Heart left ventricle (tissue), 16 donors: ENCODE measurements at regions of chr11 and their contacts with region 1.

Region 1: GRCh38 chr11:1931341-1932099 is 12.0 kb downstream of the TNNT3 start:
- DNase-seq: peak; percentile 47 to 67 (median 64)
- ATAC-seq: peak in 2 of 4 donors; percentile 31 to 35
- H3K4me3 ChIP-seq: no peak overlapping the region
- H3K27ac ChIP-seq: peak overlapping the region; percentile 4 to 67 (median 53)
- H3K4me1 ChIP-seq: peaks cover 0 to 39% (median 17%) of the 10 kb centered on the region in 12 donors
- H3K27me3 ChIP-seq: no peaks in the 10 kb centered on the region
- CTCF ChIP-seq: no peak
- POLR2A ChIP-seq: no peak

Region 2: DNA sequence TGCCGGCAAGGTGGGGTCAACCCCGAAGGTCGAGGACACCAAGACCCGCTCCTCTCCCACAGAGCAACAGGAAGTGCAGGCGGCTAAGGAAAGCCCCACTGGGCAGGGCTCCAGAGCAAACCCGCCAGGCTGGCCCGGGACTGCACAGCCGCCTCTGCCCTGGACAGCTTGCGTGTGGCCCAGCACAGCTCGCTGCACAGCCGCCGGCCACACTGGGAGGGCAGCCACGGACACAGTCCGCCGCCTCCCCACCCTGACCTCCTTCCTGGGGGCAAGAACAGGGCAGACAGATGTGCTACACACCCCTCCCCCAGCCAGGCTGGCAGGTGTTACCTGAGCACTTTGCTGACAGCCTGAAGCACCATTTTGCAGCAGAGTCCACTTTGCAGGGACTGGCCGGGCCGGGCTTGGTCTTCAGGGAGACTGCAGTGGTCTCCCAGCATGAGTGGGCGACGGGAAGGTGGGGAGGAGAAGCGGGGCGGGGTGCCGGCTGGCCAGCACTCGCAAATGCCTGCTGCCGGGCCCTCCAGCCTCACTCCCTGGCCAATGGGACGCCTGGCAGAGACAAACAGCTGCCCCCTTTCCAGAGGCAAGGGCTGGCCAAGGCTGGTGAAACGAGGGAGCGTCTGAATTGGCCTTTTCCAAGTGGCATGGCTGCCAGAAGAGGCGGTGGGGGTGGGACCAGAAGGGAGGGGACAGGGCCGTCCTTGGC is 445.2 kb before region 1 on chr11 and contains the start of gene MOB2:
- intact Hi-C with region 1: no loop called
- DNase-seq: peak in 4 of 5 donors; percentile 40 to 76 (median 60)
- ATAC-seq: peak in 3 of 4 donors; percentile 48 to 63 (median 58)
- H3K4me3 ChIP-seq: peak within 1 kb of the TSS in 10 of 12 donors; percentile 10 to 48 (median 36)
- H3K27ac ChIP-seq: peak within 1 kb of the TSS in 9 of 12 donors; percentile 12 to 92 (median 26)
- H3K4me1 ChIP-seq: peaks cover 19 to 90% (median 65%) of the 10 kb centered on the region in 12 donors
- H3K27me3 ChIP-seq: no peaks in the 10 kb centered on the region
- CTCF ChIP-seq: no peak
- POLR2A ChIP-seq: no peak
- total RNA-seq, gene MOB2: 35.5 to 53.7 (median 44.7) TPM

Region 3: GRCh38 chr11:1832211-1832919 is 99.2 kb before region 1 on chr11:
- intact Hi-C with region 1: no loop called
- DNase-seq: peak in 4 of 5 donors; percentile 52 to 80 (median 60)
- ATAC-seq: peak; percentile 74 to 83 (median 80)
- H3K4me3 ChIP-seq: peak overlapping the region in 9 of 12 donors; percentile 5 to 40 (median 28)
- H3K27ac ChIP-seq: no peak overlapping the region
- H3K4me1 ChIP-seq: peaks cover 0 to 15% (median 7%) of the 10 kb centered on the region in 12 donors
- H3K27me3 ChIP-seq: peaks cover 0 to 18% (median 0%) of the 10 kb centered on the region in 9 donors
- CTCF ChIP-seq: peak in 11 of 12 donors; percentile 95 to 100 (median 98)
- POLR2A ChIP-seq: peak in 1 of 2 donors; percentile 18

Region 4: DNA sequence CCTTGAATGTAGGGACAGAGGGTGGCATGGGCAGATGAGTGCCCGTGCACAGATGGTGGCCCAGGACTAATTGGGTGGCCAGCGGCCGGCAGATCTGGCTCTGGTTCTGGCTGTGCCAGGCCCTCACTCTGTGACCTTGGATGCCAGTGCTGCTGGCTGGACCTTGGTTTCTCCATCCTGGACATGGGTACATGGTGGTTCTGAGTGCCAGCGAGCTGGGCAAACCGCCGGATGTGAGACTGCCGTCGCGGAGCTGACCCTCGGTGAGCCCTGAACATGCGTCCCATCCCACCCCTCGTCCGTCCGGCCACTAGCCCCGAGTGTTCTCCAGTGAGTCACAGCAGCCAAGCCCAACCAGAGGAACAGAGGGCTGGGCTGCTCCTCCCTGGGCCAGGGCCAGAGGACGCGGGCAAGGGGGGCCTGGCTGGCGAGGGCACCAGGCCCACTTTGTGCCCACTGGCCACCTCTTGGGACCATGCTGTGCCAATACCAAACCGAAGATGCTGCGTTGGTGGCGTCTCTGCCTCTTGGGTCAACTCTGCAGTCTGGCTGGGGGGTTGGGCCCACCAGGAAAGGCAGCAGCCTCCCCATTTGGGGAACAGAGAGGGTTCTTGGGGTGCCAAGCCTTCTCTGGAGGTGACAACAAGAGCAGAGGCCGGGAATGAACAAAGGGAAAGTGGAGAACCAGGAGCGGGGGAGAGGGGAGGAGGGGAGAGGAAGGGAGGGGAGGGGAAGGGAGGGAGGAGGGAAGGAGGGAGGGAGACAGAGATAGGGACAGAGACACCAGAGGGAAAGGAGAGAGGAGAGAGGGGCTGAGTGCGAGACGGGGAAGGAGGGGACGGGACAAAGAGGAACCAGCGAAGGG is 67.9 kb before region 1 on chr11:
- intact Hi-C with region 1: no loop called
- DNase-seq: peak; percentile 89 to 94 (median 92)
- ATAC-seq: peak; percentile 89 to 95 (median 91)
- H3K4me3 ChIP-seq: peak overlapping the region in 10 of 12 donors; percentile 33 to 70 (median 52)
- H3K27ac ChIP-seq: peak overlapping the region; percentile 66 to 94 (median 86)
- H3K4me1 ChIP-seq: peaks cover 11 to 51% (median 23%) of the 10 kb centered on the region in 12 donors
- H3K27me3 ChIP-seq: no peaks in the 10 kb centered on the region
- CTCF ChIP-seq: no peak
- POLR2A ChIP-seq: peak in 1 of 2 donors; percentile 28

Region 5: DNA sequence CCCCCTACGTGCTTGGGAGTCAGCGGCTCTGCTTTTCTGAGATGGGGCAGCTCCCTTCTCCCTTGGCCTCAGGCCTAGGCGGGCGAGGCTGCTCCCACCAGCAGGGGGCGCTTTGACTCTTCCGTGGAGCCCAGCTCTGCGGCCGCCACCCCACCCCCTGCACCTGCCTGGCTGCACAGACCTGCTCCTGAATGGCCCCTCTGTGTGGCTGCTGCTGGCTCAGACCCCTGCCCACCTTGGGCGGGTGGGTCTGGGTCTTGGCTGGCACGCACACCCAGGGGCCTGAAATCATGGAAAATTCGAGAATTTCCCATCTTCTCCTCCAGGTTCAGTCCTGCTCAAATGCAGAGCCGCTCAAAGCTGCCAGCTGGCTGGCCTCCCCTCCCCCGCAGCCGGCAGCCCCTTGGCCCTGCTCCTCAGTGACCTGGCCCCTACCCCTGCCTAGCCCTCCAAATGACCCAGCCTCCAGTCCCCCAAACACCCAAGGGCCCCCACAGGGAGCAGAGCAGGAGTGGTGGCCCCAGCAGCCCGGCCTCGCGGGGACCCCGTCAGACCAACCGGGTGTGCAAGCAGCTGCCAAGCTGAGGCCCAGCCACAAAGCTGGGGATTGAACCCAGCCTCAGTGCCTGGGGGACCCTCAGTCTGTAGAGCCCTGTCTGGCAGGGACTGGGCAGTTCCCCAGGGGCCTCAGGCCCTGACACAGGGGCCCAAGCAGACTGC is 48.8 kb before region 1 on chr11:
- intact Hi-C with region 1: loop called in 1 of 10 experiments (anchors 5 kb)
- DNase-seq: peak; percentile 87 to 94 (median 88)
- ATAC-seq: peak; percentile 75 to 83 (median 78)
- H3K4me3 ChIP-seq: peak overlapping the region in 1 of 12 donors; percentile 13
- H3K27ac ChIP-seq: peak overlapping the region; percentile 85 to 99 (median 96)
- H3K4me1 ChIP-seq: peaks cover 19 to 53% (median 44%) of the 10 kb centered on the region in 12 donors
- H3K27me3 ChIP-seq: no peaks in the 10 kb centered on the region
- CTCF ChIP-seq: peak; percentile 87 to 98 (median 93)
- POLR2A ChIP-seq: no peak

Region 6: GRCh38 chr11:1912289-1912878 is 19.1 kb before region 1 on chr11:
- intact Hi-C with region 1: loop called in 4 of 10 experiments (anchors 2 kb)
- DNase-seq: peak in 3 of 5 donors; percentile 13 to 48 (median 29)
- ATAC-seq: no peak
- H3K4me3 ChIP-seq: no peak overlapping the region
- H3K27ac ChIP-seq: peak overlapping the region in 10 of 12 donors; percentile 21 to 88 (median 64)
- H3K4me1 ChIP-seq: peaks cover 1 to 48% (median 26%) of the 10 kb centered on the region in 12 donors
- H3K27me3 ChIP-seq: no peaks in the 10 kb centered on the region
- CTCF ChIP-seq: no peak
- POLR2A ChIP-seq: no peak